ENCODE measurements at regions of chr5 and their contacts with region 1.

Region 1: GRCh38 chr5:79630444-79630843 is 18.2 kb downstream of the TENT2 start:
- DNase-seq: no peak
- ATAC-seq: no peak
- H3K4me3 ChIP-seq: no peak overlapping the region
- H3K4me3 Mint-ChIP-seq: no peak overlapping the region
- H3K27ac ChIP-seq: peak overlapping the region in 1 of 2 donors; percentile 10
- H3K27ac Mint-ChIP-seq: no peak overlapping the region
- H3K4me1 ChIP-seq: peaks cover 4 to 7% of the 10 kb centered on the region in 2 donors
- H3K4me1 Mint-ChIP-seq: peaks cover 23% of the 10 kb centered on the region
- H3K27me3 ChIP-seq: no peaks in the 10 kb centered on the region
- H3K27me3 Mint-ChIP-seq: no peaks in the 10 kb centered on the region
- CTCF ChIP-seq: no peak

Region 2: GRCh38 chr5:79582186-79582585 is 48.3 kb before region 1 on chr5:
- CTCF ChIA-PET with region 1: no interaction called
- POLR2A ChIA-PET with region 1: no interaction called
- intact Hi-C with region 1: no loop called
- DNase-seq: no peak
- ATAC-seq: no peak
- H3K4me3 ChIP-seq: no peak overlapping the region
- H3K4me3 Mint-ChIP-seq: no peak overlapping the region
- H3K27ac ChIP-seq: no peak overlapping the region
- H3K27ac Mint-ChIP-seq: no peak overlapping the region
- H3K4me1 ChIP-seq: no peaks in the 10 kb centered on the region
- H3K4me1 Mint-ChIP-seq: no peaks in the 10 kb centered on the region
- H3K27me3 ChIP-seq: peaks cover 0 to 5% (median 0%) of the 10 kb centered on the region in 4 experiments
- H3K27me3 Mint-ChIP-seq: peaks cover 30% of the 10 kb centered on the region
- CTCF ChIP-seq: no peak

Region 3: DNA sequence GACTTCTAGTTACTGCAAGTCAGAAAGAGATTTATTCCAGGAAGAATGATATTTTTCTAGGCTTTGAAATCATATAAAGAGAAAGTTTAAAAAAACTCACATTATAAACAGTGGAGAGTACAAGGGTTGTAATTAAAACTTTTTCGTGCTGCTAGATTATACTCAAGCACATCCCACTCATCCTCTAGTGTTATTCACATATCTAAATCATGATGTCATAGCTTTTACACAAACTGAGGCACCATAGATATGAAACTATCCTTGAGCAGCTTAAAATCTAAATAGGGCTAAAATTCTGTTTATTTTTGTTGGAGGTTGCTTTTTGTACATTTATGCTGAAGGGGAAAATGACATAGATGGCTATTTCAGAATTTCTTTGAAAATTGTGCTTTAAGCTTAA is 11.8 kb after region 1 on chr5:
- CTCF ChIA-PET with region 1: no interaction called
- POLR2A ChIA-PET with region 1: no interaction called
- intact Hi-C with region 1: loop called (anchors 2 kb)
- DNase-seq: no peak
- ATAC-seq: no peak
- H3K4me3 ChIP-seq: no peak overlapping the region
- H3K4me3 Mint-ChIP-seq: no peak overlapping the region
- H3K27ac ChIP-seq: no peak overlapping the region
- H3K27ac Mint-ChIP-seq: no peak overlapping the region
- H3K4me1 ChIP-seq: no peaks in the 10 kb centered on the region
- H3K4me1 Mint-ChIP-seq: no peaks in the 10 kb centered on the region
- H3K27me3 ChIP-seq: no peaks in the 10 kb centered on the region
- H3K27me3 Mint-ChIP-seq: no peaks in the 10 kb centered on the region
- CTCF ChIP-seq: no peak

Measured in B cell (primary cell).